Calu3 (cell line): ENCODE measurements at regions of chr10 and their contacts with region 1.

Region 1: DNA sequence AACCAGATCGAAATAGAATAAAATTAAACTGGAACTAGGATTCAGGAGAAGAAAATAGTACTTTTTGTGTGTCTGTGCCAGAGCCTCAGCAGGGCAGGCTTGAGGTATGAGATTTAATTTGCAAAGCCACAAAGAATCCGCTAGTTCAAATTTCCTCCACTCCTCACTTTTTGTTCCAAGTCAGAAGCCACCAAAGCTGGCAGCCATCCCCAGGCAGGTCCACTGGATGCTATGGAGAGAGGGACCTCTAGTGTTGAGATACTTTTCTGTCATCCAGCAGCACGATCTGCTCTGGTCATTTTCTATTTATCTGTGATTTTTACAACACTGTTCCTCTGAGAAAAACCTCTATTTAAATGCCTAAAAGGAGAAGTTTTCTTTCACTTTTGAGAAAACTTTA is 147.9 kb upstream of the FRMD4A start:
- DNase-seq: peak; percentile 45
- H3K4me3 Mint-ChIP-seq: no peak overlapping the region
- H3K27ac Mint-ChIP-seq: no peak overlapping the region
- H3K4me1 Mint-ChIP-seq: no peaks in the 10 kb centered on the region
- H3K27me3 Mint-ChIP-seq: peaks cover 20% of the 10 kb centered on the region
- CTCF ChIP-seq: peak; percentile 17

Region 2: GRCh38 chr10:13787015-13787421 is 691.6 kb before region 1 on chr10:
- CTCF ChIA-PET with region 1: no interaction called
- intact Hi-C with region 1: loop called (anchors 5 kb)
- DNase-seq: no peak
- H3K4me3 Mint-ChIP-seq: no peak overlapping the region
- H3K27ac Mint-ChIP-seq: no peak overlapping the region
- H3K4me1 Mint-ChIP-seq: no peaks in the 10 kb centered on the region
- H3K27me3 Mint-ChIP-seq: no peaks in the 10 kb centered on the region
- CTCF ChIP-seq: no peak

Region 3: DNA sequence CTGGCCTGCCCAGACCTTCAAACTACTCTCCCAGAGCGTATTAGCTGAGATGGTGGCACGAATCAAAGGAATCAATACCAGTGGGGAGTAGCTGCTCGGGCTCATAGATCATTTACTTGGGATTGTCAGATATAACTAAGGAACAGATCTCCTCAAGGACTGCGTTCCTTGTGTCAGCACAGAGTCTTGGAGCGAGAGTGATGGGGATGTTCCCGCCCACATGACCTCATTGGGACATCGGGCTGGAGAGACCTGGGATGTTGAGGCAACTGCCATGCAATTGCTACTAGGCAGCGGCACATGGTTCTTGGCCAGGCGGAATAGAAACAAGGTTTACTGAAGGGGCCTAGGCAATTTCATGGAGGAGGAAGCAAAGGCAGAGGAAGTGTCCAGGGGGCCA is 280.5 kb before region 1 on chr10:
- CTCF ChIA-PET with region 1: interaction called, 6 read pairs
- intact Hi-C with region 1: loop called (anchors 1 kb)
- DNase-seq: no peak
- H3K4me3 Mint-ChIP-seq: no peak overlapping the region
- H3K27ac Mint-ChIP-seq: no peak overlapping the region
- H3K4me1 Mint-ChIP-seq: no peaks in the 10 kb centered on the region
- H3K27me3 Mint-ChIP-seq: peaks cover 78% of the 10 kb centered on the region
- CTCF ChIP-seq: no peak

Region 4: GRCh38 chr10:14302035-14302434 is 176.6 kb before region 1 on chr10:
- CTCF ChIA-PET with region 1: no interaction called
- intact Hi-C with region 1: loop called (anchors 5 kb)
- DNase-seq: no peak
- H3K4me3 Mint-ChIP-seq: no peak overlapping the region
- H3K27ac Mint-ChIP-seq: no peak overlapping the region
- H3K4me1 Mint-ChIP-seq: no peaks in the 10 kb centered on the region
- H3K27me3 Mint-ChIP-seq: peaks cover 9% of the 10 kb centered on the region
- CTCF ChIP-seq: no peak